CD8-positive, alpha-beta T cell (primary cell): ENCODE measurements at regions of chr9 and their contacts with region 1.

Region 1: DNA sequence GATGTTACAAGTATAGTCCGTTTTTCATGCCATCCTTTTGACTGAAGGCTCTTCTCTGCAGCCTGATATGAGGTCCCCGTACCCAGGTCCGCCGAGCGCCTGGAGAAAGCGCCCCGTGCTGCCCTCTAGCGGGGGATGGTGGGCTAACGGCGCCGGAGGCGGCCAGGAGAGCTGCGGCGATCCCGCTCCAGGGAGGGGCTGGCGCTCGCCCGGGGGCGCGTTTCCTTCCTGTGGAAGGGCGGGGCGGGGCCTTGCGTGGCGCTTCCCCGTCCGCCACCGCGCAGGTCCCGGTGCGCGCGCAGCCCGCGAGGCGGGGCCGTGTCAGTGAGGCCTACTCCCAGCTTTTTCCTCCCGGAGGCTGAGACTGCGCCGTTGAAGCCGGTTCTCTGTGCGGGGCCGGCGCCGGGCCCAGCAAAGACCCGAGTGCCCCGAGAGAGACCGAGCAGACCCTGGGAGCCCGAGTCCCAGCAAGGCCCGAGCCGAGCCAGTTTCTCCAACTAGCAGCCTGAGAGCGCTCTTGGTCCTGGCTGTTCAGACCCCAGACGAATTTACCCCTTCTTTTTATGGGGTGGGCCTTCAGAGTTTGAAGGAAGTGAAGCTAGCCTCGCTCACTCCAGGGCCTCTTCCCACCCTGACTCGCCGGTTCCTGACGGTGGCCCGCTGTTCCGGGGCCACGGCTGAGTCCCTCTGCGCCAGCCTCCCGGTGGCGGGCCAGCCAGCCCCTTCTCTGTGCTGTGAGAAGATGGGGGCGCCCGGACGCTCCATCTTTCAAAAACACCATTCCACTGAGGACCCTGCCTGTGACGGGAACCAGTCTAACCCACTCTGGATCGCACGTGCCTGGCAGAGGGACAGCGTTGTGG is 9.7 kb upstream of the PHF2 start:
- DNase-seq: peak; percentile 97 to 100 (median 99)
- ATAC-seq: peak; percentile 97
- H3K4me3 ChIP-seq: peak overlapping the region; percentile 65 to 72
- H3K4me3 Mint-ChIP-seq: peak overlapping the region; percentile 84
- H3K27ac ChIP-seq: peak overlapping the region; percentile 79 to 94
- H3K27ac Mint-ChIP-seq: peak overlapping the region; percentile 98
- H3K4me1 ChIP-seq: peaks cover 15% of the 10 kb centered on the region
- H3K4me1 Mint-ChIP-seq: peaks cover 18% of the 10 kb centered on the region
- H3K27me3 ChIP-seq: no peaks in the 10 kb centered on the region
- H3K27me3 Mint-ChIP-seq: no peaks in the 10 kb centered on the region
- CTCF ChIP-seq: peak; percentile 95

Region 2: DNA sequence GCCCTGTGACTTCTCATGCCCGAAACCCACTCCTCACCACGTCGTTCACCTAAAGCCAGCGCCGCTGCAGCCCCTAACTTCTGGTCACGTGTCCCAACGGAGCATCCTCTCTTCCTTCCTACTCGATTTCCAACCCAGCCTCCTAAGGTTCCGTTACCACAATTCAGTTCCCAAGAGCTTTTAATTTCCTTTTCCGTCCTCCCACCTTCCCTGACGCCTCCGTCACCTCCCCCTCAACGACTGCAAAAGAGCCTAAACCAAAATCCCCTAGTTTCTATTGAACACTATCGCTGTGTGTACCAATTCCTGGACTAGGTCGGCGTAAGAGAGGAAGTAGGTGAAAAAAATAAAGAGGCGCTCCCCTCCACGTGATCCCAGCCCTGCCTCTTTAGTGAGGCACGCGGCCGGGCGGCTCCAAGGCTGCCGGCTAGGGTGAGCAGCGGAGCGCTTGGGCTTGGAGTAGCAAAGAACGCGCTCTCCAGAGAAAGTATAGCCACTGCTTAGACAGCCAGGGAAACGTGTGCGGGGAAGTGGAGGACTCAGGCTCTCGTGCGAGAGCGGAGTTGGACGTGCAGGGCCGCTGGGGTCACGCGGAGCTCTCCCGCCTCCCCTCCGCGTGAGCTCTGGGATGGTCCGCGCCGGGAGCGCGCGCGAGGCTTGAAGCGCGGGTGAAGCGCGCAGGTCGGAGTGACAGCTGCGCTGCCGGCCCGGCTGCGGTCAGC is 1241.2 kb before region 1 on chr9 and contains the starts of genes CENPP and NOL8:
- CTCF ChIA-PET with region 1: no interaction called
- POLR2A ChIA-PET with region 1: no interaction called
- intact Hi-C with region 1: loop called in 1 of 2 experiments (anchors 10 kb)
- DNase-seq: peak; percentile 70 to 93 (median 83)
- ATAC-seq: peak; percentile 92
- H3K4me3 ChIP-seq: peak within 1 kb of the TSS; percentile 81 to 84
- H3K4me3 Mint-ChIP-seq: peak within 1 kb of the TSS; percentile 99
- H3K27ac ChIP-seq: peak within 1 kb of the TSS; percentile 82 to 97
- H3K27ac Mint-ChIP-seq: peak within 1 kb of the TSS; percentile 99
- H3K4me1 ChIP-seq: peaks cover 18% of the 10 kb centered on the region
- H3K4me1 Mint-ChIP-seq: peaks cover 38% of the 10 kb centered on the region
- H3K27me3 ChIP-seq: no peaks in the 10 kb centered on the region
- H3K27me3 Mint-ChIP-seq: no peaks in the 10 kb centered on the region
- CTCF ChIP-seq: no peak
- total RNA-seq, gene CENPP: 2.8 to 4.6 TPM
- total RNA-seq, gene NOL8: 63.2 to 69.0 TPM

Region 3: DNA sequence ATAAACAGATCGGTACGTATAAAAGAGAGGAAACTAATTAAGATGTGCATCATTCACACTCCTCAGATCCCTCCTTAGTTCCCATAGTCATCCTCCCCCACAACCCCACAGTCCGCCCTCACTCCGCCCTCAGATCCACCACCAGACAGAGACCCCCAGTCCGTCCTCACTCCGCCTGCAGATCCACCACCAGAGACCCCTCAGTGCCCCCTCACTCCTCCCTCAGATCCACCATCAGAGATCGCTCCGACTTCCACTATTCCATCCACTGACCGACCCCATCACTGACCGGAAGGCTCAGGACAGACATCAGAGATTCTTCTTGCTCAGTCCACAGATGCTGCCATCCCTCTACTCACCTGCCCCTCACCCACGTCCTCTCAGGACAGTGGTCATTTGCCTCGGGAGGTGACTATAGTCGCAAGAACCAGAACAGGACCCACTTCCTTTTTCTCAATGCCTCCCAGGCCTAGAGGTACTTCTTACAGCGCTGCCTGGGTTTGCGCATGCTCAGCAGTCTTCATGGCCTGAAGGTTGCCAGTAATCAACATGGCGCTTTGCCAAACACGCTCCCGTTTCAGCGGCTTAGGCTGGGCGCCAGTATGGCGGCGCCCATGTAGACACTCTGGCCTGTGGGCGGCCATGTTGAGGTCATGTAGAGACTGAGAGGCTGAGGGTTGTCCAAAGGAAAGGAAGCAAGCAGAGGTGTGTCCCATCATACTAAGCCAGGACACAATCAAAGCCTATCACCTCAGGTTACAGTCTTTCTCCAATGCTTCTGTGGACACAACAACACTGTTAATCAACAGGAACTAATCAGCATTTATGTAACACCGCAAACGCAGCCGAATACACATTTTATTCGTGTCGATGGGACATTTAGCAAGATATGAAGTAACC is 688.9 kb before region 1 on chr9 and contains the start of gene ZNF484:
- CTCF ChIA-PET with region 1: no interaction called
- POLR2A ChIA-PET with region 1: no interaction called
- intact Hi-C with region 1: loop called (anchors 1 to 10 kb)
- DNase-seq: peak; percentile 91 to 100 (median 98)
- ATAC-seq: peak; percentile 96
- H3K4me3 ChIP-seq: peak within 1 kb of the TSS; percentile 76 to 85
- H3K4me3 Mint-ChIP-seq: peak within 1 kb of the TSS; percentile 100
- H3K27ac ChIP-seq: peak within 1 kb of the TSS; percentile 81 to 90
- H3K27ac Mint-ChIP-seq: peak within 1 kb of the TSS; percentile 100
- H3K4me1 ChIP-seq: peaks cover 19% of the 10 kb centered on the region
- H3K4me1 Mint-ChIP-seq: peaks cover 48% of the 10 kb centered on the region
- H3K27me3 ChIP-seq: no peaks in the 10 kb centered on the region
- H3K27me3 Mint-ChIP-seq: no peaks in the 10 kb centered on the region
- CTCF ChIP-seq: no peak
- total RNA-seq, gene ZNF484: 18.4 to 18.7 TPM

Region 4: GRCh38 chr9:93108291-93109041 is 458.2 kb before region 1 on chr9:
- CTCF ChIA-PET with region 1: interaction called, 7 read pairs
- POLR2A ChIA-PET with region 1: no interaction called
- intact Hi-C with region 1: loop called in 1 of 2 experiments (anchors 1 kb)
- DNase-seq: peak in 1 of 9 experiments; percentile 26
- ATAC-seq: no peak
- H3K4me3 ChIP-seq: no peak overlapping the region
- H3K4me3 Mint-ChIP-seq: no peak overlapping the region
- H3K27ac ChIP-seq: no peak overlapping the region
- H3K27ac Mint-ChIP-seq: no peak overlapping the region
- H3K4me1 ChIP-seq: peaks cover 47% of the 10 kb centered on the region
- H3K4me1 Mint-ChIP-seq: peaks cover 37% of the 10 kb centered on the region
- H3K27me3 ChIP-seq: no peaks in the 10 kb centered on the region
- H3K27me3 Mint-ChIP-seq: no peaks in the 10 kb centered on the region
- CTCF ChIP-seq: no peak

Region 5: DNA sequence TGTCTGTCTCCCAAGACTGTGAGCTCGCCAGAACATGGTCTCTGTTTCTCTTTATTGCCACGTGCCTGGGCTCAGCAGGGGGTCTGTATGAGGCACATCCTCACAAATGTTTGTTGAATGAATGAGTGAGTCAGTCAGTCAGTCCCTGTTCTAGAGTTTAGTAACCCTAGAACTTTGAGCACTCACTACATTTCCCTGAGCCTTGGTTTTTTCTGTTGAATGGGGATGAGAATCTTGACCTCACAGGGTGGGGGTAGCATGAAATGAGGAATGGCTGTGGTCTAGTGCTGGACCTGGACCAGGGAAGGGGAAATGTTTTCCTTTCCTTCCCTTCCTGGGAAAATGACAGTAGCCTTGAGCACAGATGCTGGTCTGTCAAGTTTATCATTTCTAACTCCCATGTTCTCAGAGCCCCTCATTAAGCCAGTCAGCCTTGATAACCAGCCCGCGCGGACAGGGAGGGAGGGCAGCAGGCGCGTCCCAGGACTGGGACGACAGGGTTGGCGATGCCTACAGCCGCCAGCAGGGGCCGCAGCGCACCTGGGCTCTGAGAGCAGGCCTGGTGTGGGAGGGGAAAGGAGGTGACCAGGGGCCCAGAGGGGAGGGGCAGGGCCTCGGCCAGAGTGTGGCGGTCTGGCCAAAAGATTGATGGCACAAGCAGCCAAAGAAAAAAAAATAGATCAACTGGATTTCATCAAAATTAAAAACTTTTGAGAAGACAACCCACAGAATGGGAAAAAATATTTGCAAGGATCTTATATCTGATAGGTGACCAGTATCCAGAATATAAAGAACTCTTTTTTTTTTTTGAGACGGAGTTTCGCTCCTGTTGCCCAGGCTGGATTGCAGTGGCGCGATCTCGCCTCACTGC is 406.8 kb before region 1 on chr9:
- CTCF ChIA-PET with region 1: interaction called, 3 read pairs
- POLR2A ChIA-PET with region 1: no interaction called
- intact Hi-C with region 1: loop called (anchors 5 to 10 kb)
- DNase-seq: peak; percentile 43 to 81 (median 71)
- ATAC-seq: peak; percentile 91
- H3K4me3 ChIP-seq: no peak overlapping the region
- H3K4me3 Mint-ChIP-seq: no peak overlapping the region
- H3K27ac ChIP-seq: no peak overlapping the region
- H3K27ac Mint-ChIP-seq: no peak overlapping the region
- H3K4me1 ChIP-seq: peaks cover 6% of the 10 kb centered on the region
- H3K4me1 Mint-ChIP-seq: peaks cover 6% of the 10 kb centered on the region
- H3K27me3 ChIP-seq: peaks cover 0 to 5% of the 10 kb centered on the region in 2 experiments
- H3K27me3 Mint-ChIP-seq: no peaks in the 10 kb centered on the region
- CTCF ChIP-seq: peak; percentile 90

Region 6: GRCh38 chr9:93268551-93269314 is 297.9 kb before region 1 on chr9:
- CTCF ChIA-PET with region 1: no interaction called
- POLR2A ChIA-PET with region 1: no interaction called
- intact Hi-C with region 1: no loop called
- DNase-seq: peak in 4 of 9 experiments; percentile 38 to 60 (median 51)
- ATAC-seq: peak; percentile 84
- H3K4me3 ChIP-seq: peak overlapping the region in 1 of 2 experiments; percentile 7
- H3K4me3 Mint-ChIP-seq: peak overlapping the region; percentile 73
- H3K27ac ChIP-seq: no peak overlapping the region
- H3K27ac Mint-ChIP-seq: peak overlapping the region; percentile 11
- H3K4me1 ChIP-seq: peaks cover 15% of the 10 kb centered on the region
- H3K4me1 Mint-ChIP-seq: peaks cover 13% of the 10 kb centered on the region
- H3K27me3 ChIP-seq: peaks cover 0 to 9% of the 10 kb centered on the region in 2 experiments
- H3K27me3 Mint-ChIP-seq: peaks cover 12% of the 10 kb centered on the region
- CTCF ChIP-seq: no peak

Region 7: GRCh38 chr9:93520523-93520922 is 46.1 kb before region 1 on chr9:
- CTCF ChIA-PET with region 1: no interaction called
- POLR2A ChIA-PET with region 1: no interaction called
- intact Hi-C with region 1: no loop called
- DNase-seq: peak in 2 of 9 experiments; percentile 11 to 23
- ATAC-seq: no peak
- H3K4me3 ChIP-seq: no peak overlapping the region
- H3K4me3 Mint-ChIP-seq: no peak overlapping the region
- H3K27ac ChIP-seq: no peak overlapping the region
- H3K27ac Mint-ChIP-seq: peak overlapping the region; percentile 5
- H3K4me1 ChIP-seq: no peaks in the 10 kb centered on the region
- H3K4me1 Mint-ChIP-seq: peaks cover 19% of the 10 kb centered on the region
- H3K27me3 ChIP-seq: no peaks in the 10 kb centered on the region
- H3K27me3 Mint-ChIP-seq: no peaks in the 10 kb centered on the region
- CTCF ChIP-seq: no peak

Region 8: DNA sequence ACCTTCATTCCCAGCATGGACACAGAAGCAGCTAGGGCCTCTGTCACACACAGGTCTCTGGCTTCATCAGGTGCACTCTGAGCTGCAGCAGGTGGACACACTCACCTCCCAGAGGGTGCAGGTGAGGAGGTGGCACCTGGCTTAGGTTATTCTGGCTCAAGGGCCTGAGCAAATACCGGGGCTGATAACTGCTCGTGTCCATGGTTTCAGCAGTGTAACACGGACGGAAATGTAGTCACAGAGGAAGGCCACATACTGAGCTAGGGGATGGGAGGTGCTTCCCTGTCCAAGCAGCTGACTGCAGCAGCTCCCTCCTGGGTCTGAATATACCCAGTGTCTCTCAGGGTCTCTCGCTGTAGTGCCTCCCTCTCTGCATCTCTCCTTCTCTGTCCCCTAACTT is 15.5 kb after region 1 on chr9:
- CTCF ChIA-PET with region 1: interaction called, 8 read pairs
- POLR2A ChIA-PET with region 1: interaction called, 12 read pairs
- intact Hi-C with region 1: loop called in 1 of 2 experiments (anchors 2 kb)
- DNase-seq: peak in 2 of 9 experiments; percentile 9 to 34
- ATAC-seq: no peak
- H3K4me3 ChIP-seq: no peak overlapping the region
- H3K4me3 Mint-ChIP-seq: no peak overlapping the region
- H3K27ac ChIP-seq: no peak overlapping the region
- H3K27ac Mint-ChIP-seq: no peak overlapping the region
- H3K4me1 ChIP-seq: peaks cover 11% of the 10 kb centered on the region
- H3K4me1 Mint-ChIP-seq: peaks cover 72% of the 10 kb centered on the region
- H3K27me3 ChIP-seq: no peaks in the 10 kb centered on the region
- H3K27me3 Mint-ChIP-seq: no peaks in the 10 kb centered on the region
- CTCF ChIP-seq: no peak